ENCODE measurements at regions of chr3 and their contacts with region 1.

Region 1: GRCh38 chr3:136955813-136956212 is 2.0 kb upstream of the IL20RB start:
- DNase-seq: peak; percentile 63
- H3K4me3 Mint-ChIP-seq: no peak overlapping the region
- H3K27ac Mint-ChIP-seq: peak overlapping the region; percentile 75
- H3K4me1 Mint-ChIP-seq: peaks cover 58% of the 10 kb centered on the region
- H3K27me3 Mint-ChIP-seq: no peaks in the 10 kb centered on the region
- CTCF ChIP-seq: no peak

Region 2: GRCh38 chr3:136075218-136075808 is 880.5 kb before region 1 on chr3:
- CTCF ChIA-PET with region 1: no interaction called
- POLR2A ChIA-PET with region 1: interaction called, 3 read pairs
- intact Hi-C with region 1: loop called (anchors 10 kb)
- DNase-seq: peak; percentile 86
- H3K4me3 Mint-ChIP-seq: no peak overlapping the region
- H3K27ac Mint-ChIP-seq: peak overlapping the region; percentile 8
- H3K4me1 Mint-ChIP-seq: peaks cover 22% of the 10 kb centered on the region
- H3K27me3 Mint-ChIP-seq: no peaks in the 10 kb centered on the region
- CTCF ChIP-seq: peak; percentile 86

Region 3: DNA sequence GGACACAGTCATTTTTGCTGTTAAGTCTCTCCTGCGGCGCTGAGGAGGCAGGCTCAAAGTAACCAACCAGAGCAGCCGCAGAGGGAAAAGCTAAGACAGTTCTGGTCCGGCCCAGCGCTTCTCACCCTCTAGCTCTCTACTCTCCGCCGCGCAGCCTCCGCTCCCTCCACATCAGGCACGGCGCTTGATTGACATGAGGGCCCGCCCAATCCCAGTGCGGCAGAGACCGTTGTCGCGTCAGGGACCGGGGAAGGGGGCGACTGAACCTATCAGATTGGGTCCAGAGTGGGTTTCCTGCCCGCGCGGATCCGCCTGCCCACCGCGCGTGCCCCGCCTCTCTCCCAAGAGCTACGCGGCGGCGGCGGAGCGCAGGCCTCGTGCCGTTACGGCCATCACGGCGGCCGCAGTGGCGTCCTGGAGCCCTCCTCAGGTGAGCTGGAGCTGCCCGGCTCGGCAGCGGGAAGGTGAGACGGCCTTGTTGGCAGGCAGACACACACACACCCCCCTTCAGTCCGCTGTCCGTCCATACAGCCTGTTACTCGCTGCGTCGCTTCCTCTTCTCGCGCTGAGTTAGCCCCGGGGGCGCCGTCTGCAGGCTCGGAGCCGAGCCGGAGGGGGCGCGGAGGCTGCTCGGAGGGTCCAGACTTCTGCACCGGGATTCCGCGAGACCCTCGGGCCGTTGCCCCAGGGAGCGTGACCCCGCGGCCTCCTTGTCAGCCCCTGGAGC is 93.8 kb before region 1 on chr3 and contains the start of gene NCK1:
- CTCF ChIA-PET with region 1: interaction called, 3 read pairs
- POLR2A ChIA-PET with region 1: interaction called, 159 read pairs
- intact Hi-C with region 1: loop called (anchors 5 kb)
- DNase-seq: peak; percentile 98
- H3K4me3 Mint-ChIP-seq: peak within 1 kb of the TSS; percentile 87
- H3K27ac Mint-ChIP-seq: peak within 1 kb of the TSS; percentile 88
- H3K4me1 Mint-ChIP-seq: peaks cover 17% of the 10 kb centered on the region
- H3K27me3 Mint-ChIP-seq: no peaks in the 10 kb centered on the region
- CTCF ChIP-seq: no peak
- total RNA-seq, gene NCK1: 50.4 and 59.4 TPM in 2 replicates

Region 4: DNA sequence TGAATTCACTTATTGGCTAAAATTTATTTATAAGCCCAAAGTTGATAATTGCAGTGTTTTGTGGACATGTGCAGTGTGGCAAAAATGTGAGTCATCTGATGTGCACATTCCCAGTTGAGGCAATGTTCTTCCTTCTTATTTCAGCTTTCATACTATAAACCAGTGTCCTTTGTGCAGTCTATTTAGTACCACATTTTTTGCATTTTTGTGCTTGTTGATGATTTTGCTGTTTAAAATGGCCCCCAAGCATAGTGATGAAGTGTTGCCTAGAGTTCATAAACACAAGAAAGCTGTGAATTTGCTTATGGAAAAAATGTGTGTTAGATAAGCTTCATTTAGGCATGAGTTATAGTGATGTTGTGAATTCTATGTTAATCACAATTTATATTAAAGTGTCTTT is 17.5 kb before region 1 on chr3:
- CTCF ChIA-PET with region 1: interaction called, 4 read pairs
- POLR2A ChIA-PET with region 1: interaction called, 18 read pairs
- intact Hi-C with region 1: no loop called
- DNase-seq: peak; percentile 55
- H3K4me3 Mint-ChIP-seq: no peak overlapping the region
- H3K27ac Mint-ChIP-seq: peak overlapping the region; percentile 57
- H3K4me1 Mint-ChIP-seq: peaks cover 43% of the 10 kb centered on the region
- H3K27me3 Mint-ChIP-seq: no peaks in the 10 kb centered on the region
- CTCF ChIP-seq: no peak

Region 5: GRCh38 chr3:136994772-136995516 is 39.1 kb after region 1 on chr3:
- CTCF ChIA-PET with region 1: interaction called, 9 read pairs
- POLR2A ChIA-PET with region 1: interaction called, 452 read pairs
- intact Hi-C with region 1: loop called (anchors 1 kb)
- DNase-seq: peak; percentile 99
- H3K4me3 Mint-ChIP-seq: peak overlapping the region; percentile 42
- H3K27ac Mint-ChIP-seq: peak overlapping the region; percentile 94
- H3K4me1 Mint-ChIP-seq: peaks cover 61% of the 10 kb centered on the region
- H3K27me3 Mint-ChIP-seq: no peaks in the 10 kb centered on the region
- CTCF ChIP-seq: no peak

Region 6: DNA sequence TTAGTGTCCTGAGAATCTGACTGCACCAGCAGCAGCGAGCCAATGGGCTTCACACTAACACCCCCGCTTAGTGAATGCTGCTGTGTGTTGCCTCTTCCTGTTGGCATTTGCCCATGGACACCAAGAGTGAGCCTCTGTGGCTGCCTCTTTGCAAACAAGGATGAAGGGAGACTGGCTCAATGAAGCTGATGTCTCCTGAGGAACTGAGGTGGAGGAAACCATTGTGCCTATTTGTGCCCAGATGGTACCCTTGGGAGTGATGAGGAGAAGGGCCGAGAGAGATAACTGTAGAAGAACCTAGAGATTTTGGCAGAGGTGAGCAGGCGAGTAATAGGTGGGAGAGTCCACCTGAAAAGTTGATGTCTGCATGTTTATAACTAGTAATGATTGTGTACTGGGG is 53.2 kb after region 1 on chr3:
- CTCF ChIA-PET with region 1: interaction called, 59 read pairs
- POLR2A ChIA-PET with region 1: interaction called, 106 read pairs
- intact Hi-C with region 1: no loop called
- DNase-seq: no peak
- H3K4me3 Mint-ChIP-seq: no peak overlapping the region
- H3K27ac Mint-ChIP-seq: peak overlapping the region; percentile 11
- H3K4me1 Mint-ChIP-seq: peaks cover 42% of the 10 kb centered on the region
- H3K27me3 Mint-ChIP-seq: no peaks in the 10 kb centered on the region
- CTCF ChIP-seq: no peak

Region 7: GRCh38 chr3:137020315-137020714 is 64.5 kb after region 1 on chr3:
- CTCF ChIA-PET with region 1: interaction called, 59 read pairs
- POLR2A ChIA-PET with region 1: interaction called, 106 read pairs
- intact Hi-C with region 1: no loop called
- DNase-seq: no peak
- H3K4me3 Mint-ChIP-seq: no peak overlapping the region
- H3K27ac Mint-ChIP-seq: no peak overlapping the region
- H3K4me1 Mint-ChIP-seq: no peaks in the 10 kb centered on the region
- H3K27me3 Mint-ChIP-seq: no peaks in the 10 kb centered on the region
- CTCF ChIP-seq: no peak

Measured in MCF 10A (cell line).